ENCODE measurements at regions of chr12 and their contacts with region 1.

Region 1: GRCh38 chr12:120445911-120446843 is at the starts of genes GATC and TRIAP1:
- DNase-seq: peak; percentile 70 to 94 (median 88)

Region 2: GRCh38 chr12:120276734-120277133 is 169.4 kb before region 1 on chr12:
- intact Hi-C with region 1: no loop called
- DNase-seq: no peak

Region 3: DNA sequence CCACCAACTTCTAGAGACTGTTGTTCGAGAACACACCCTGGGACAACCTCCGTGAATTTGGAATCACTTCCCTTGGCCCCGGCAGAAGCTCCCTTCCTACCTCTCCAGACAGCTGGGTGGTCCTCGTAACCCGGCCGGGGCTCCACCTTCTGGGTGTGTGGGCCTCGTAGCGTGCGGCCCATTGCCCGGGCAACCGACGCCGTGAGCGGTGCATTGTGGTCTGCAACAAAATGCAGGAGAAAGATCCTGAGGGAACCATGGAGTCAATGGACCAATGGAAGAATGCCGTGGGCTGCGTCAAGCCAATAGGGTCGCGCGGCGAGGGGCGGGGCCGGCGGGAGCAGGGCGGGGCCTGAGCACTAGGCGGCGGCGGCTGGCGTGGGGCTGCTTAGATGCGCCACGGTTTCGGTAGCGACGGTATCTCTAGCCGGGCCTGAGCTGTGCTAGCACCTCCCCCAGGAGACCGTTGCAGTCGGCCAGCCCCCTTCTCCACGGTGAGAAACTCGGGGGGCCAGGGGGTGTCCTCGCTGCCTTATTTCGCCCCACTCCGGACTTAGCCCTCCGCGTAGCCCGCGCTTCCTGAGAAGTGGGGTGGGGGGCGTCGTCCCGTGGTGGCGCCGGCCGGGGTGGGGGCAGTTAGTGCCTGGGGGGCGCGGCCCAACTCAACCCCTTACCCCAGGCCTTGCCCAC is 49.7 kb after region 1 on chr12 and contains the start of gene DYNLL1:
- intact Hi-C with region 1: loop called (anchors 5 kb)
- DNase-seq: peak; percentile 93 to 99 (median 97)

Region 4: GRCh38 chr12:120508537-120508936 is 62.4 kb after region 1 on chr12:
- intact Hi-C with region 1: no loop called
- DNase-seq: no peak

Region 5: DNA sequence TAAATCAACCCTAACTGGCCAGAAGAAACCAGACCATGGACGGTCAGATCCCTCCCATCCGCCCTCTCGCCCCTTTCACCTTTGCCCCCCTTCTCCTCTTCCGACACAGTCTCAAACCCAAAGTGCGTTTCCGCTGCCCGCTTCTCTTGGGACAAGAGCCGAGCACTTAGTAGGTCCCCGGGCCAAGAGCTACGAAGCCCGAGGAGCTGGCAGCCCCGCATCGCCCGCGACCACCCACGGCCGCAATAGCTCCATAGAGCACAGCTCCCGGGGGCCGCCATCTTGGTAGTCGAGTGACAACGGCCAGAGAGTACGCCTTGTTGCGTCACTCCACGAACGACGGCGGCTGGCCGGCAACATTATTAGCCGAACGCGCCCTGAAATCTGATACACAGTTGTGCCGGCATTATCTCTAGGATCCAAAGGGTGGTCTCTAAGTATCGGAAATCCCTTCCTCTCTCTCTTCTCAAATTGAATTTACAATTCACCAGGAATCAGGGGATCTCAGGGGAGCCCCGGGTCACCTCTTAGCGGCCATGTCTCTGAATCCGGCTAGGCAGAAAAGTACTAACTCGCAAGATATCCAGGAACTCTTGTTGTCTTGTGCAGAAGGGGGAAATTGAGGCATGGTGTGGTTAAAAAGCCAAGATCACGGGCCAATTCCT is 82.8 kb after region 1 on chr12 and contains the start of gene COQ5:
- intact Hi-C with region 1: no loop called
- DNase-seq: peak; percentile 91 to 98 (median 95)